ENCODE measurements at regions of chr15 and their contacts with region 1.

Region 1: GRCh38 chr15:25532269-25533140 is 93.7 kb upstream of the UBE3A start:
- DNase-seq: peak in 1 of 2 donors; percentile 12
- ATAC-seq: peak in 5 of 8 donors; percentile 52 to 87 (median 81)
- H3K4me3 ChIP-seq: no peak overlapping the region
- H3K27ac ChIP-seq: no peak overlapping the region
- H3K4me1 ChIP-seq: peaks cover 0 to 20% (median 0%) of the 10 kb centered on the region in 9 donors
- H3K27me3 ChIP-seq: no peaks in the 10 kb centered on the region
- CTCF ChIP-seq: no peak

Region 2: GRCh38 chr15:25456196-25456595 is 76.3 kb before region 1 on chr15:
- intact Hi-C with region 1: no loop called
- DNase-seq: no peak
- ATAC-seq: no peak
- H3K4me3 ChIP-seq: no peak overlapping the region
- H3K27ac ChIP-seq: no peak overlapping the region
- H3K4me1 ChIP-seq: no peaks in the 10 kb centered on the region
- H3K27me3 ChIP-seq: no peaks in the 10 kb centered on the region
- CTCF ChIP-seq: no peak

Region 3: DNA sequence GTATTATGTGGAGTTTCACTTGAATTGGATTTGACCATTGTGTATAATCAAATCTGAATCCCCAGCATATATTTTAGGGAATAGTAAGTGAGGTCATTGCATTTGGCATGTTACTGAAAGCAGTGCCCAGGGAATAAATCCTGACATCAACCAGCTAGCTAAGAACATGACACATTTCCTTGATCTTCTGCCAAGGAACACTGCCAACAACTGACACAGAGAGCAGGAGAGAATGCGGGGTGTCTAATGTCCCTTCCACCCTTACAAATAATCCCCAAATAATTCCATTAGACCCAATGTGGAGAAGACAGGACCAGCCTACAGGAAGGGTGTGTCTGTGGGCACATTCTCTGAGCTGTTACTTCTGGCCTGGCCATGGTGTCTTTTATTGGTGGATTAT is 63.1 kb before region 1 on chr15:
- intact Hi-C with region 1: no loop called
- DNase-seq: peak in 1 of 2 donors; percentile 74
- ATAC-seq: peak; percentile 73 to 94 (median 86)
- H3K4me3 ChIP-seq: no peak overlapping the region
- H3K27ac ChIP-seq: peak overlapping the region in 5 of 10 donors; percentile 40 to 51 (median 46)
- H3K4me1 ChIP-seq: peaks cover 0 to 24% (median 6%) of the 10 kb centered on the region in 9 donors
- H3K27me3 ChIP-seq: no peaks in the 10 kb centered on the region
- CTCF ChIP-seq: no peak

Region 4: DNA sequence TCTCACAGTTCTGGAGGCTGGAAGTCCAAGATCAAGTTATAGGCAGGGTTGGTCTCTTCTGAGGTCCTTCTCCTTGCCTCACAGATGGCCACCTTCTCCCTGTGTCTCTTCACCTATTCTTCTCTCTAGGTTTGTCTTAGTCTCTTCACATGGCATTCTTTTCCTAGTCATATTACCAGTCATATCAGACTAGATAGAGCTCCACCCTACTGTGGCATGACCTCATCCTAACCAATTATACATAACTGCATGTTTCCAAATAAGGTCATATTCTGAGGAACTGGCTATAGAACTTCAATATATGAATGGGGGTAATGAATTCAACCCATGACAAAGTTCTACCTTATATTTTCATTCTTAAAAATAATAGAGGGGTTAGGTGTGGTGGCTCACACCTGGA is 102.7 kb after region 1 on chr15:
- intact Hi-C with region 1: no loop called
- DNase-seq: no peak
- ATAC-seq: no peak
- H3K4me3 ChIP-seq: no peak overlapping the region
- H3K27ac ChIP-seq: no peak overlapping the region
- H3K4me1 ChIP-seq: no peaks in the 10 kb centered on the region
- H3K27me3 ChIP-seq: peaks cover 0 to 3% (median 0%) of the 10 kb centered on the region in 7 donors
- CTCF ChIP-seq: no peak

Region 5: GRCh38 chr15:25670025-25670554 is 137.6 kb after region 1 on chr15:
- intact Hi-C with region 1: loop called in 1 of 10 experiments (anchors 10 kb)
- DNase-seq: peak; percentile 68 to 78
- ATAC-seq: peak; percentile 91 to 96 (median 94)
- H3K4me3 ChIP-seq: peak overlapping the region in 6 of 10 donors; percentile 13 to 43 (median 33)
- H3K27ac ChIP-seq: peak overlapping the region in 9 of 10 donors; percentile 10 to 90 (median 75)
- H3K4me1 ChIP-seq: peaks cover 3 to 34% (median 20%) of the 10 kb centered on the region in 9 donors
- H3K27me3 ChIP-seq: peaks cover 0 to 11% (median 0%) of the 10 kb centered on the region in 7 donors
- CTCF ChIP-seq: peak in 1 of 9 donors; percentile 27

Region 6: DNA sequence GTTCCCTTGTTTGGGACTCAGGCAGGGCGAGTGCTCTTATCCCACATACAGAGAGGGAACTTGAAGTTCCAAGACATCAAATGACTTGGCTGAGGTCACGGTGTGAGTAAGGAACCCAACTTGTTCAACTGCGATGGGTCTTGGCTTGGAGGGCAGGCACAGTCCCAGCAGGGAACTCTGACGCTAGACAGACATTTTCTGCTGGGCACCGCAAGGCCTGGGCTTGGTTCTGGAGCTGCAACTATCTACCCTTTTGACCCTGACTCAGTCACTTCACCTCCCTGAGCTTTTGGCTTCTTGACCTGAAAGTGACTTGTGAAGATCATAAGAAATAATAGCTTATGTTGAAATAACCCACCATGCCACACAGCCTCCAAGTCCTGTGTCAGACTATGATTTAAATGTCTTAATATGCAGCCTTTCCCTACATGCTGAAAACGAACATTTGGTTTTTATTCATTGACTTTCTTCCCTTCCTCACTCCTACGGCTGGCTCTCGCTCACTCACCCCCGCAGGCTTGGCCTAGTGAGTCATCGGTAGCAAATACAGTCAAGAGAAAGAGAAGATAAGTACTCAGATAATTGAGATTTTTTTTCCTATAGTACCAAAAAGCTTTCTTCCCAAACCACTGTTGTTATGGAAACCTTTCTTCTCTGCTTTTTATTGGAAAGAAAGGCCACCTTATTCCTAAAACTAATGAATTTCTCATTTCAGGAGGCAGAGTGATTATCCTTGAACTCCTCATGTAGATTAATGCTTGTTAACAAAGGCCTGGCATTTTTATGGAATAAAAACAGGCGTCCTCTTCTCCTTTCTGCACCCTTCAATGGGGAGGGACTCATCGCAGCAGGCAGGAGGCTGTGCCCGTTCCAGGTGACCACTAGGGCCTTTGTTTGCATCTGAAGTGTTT is 152.3 kb after region 1 on chr15:
- intact Hi-C with region 1: loop called in 2 of 10 experiments (anchors 10 kb)
- DNase-seq: no peak
- ATAC-seq: peak in 6 of 8 donors; percentile 21 to 73 (median 55)
- H3K4me3 ChIP-seq: no peak overlapping the region
- H3K27ac ChIP-seq: peak overlapping the region in 4 of 10 donors; percentile 6 to 48 (median 23)
- H3K4me1 ChIP-seq: peaks cover 3 to 36% (median 23%) of the 10 kb centered on the region in 9 donors
- H3K27me3 ChIP-seq: no peaks in the 10 kb centered on the region
- CTCF ChIP-seq: no peak